ENCODE measurements at regions of chr2 and their contacts with region 1.

Region 1: DNA sequence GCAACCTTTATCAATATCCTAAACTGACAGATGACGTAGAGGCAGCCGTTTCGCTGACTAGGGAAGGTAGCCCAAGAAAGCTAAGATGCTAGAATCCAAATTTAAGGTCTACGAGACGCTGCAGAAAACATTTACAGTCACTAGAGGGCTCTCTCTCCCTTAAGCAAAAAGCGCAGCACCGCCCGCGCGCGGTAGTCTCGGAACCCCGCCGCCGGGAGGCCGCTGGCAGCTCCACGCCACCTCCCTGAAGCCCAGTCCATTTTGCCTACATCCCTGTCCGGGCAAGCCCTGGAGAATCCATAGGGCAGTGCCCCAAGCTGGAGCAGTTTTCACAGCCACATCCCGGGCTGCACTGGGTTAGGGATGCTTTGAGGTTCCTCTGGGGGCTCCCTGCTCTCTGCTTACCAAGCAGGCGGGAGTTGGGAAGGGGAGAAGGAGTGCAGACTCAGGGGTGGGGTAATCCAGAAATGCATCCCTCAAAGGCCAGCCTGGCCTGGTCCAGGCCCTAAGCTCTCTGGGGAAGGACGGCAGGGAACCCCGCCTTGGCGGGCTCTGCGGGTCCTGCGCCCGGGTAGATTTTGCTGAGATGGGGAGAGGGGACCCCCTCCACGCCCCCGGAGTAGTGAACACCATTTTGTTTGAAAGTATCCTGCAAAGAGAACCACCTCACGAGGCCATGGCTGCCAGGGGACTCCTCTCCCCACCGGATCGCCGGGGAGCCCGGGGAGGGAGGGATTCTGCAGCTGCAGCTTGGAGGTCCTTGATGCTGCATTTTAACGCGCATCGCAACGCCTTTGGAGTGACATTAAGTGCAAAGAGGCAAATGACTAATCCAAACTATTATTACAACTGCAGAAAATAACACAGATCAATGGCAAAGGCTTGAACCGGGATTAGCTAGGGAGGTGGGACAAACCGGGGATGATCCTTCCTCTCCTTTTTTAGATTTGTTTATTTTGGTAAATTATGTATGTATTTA is 1.3 kb upstream of the DPYSL5 start:
- DNase-seq: peak; percentile 82
- ATAC-seq: peak; percentile 86
- H3K4me3 ChIP-seq: no peak overlapping the region
- H3K27ac ChIP-seq: no peak overlapping the region
- H3K4me1 ChIP-seq: peaks cover 29% of the 10 kb centered on the region
- H3K27me3 ChIP-seq: peaks cover 81% of the 10 kb centered on the region
- CTCF ChIP-seq: peak; percentile 78

Region 2: GRCh38 chr2:26942543-26943295 is 96.1 kb after region 1 on chr2:
- intact Hi-C with region 1: loop called (anchors 5 kb)
- DNase-seq: peak; percentile 80
- ATAC-seq: peak; percentile 74
- H3K4me3 ChIP-seq: no peak overlapping the region
- H3K27ac ChIP-seq: no peak overlapping the region
- H3K4me1 ChIP-seq: no peaks in the 10 kb centered on the region
- H3K27me3 ChIP-seq: peaks cover 30% of the 10 kb centered on the region
- CTCF ChIP-seq: peak; percentile 85

Region 3: DNA sequence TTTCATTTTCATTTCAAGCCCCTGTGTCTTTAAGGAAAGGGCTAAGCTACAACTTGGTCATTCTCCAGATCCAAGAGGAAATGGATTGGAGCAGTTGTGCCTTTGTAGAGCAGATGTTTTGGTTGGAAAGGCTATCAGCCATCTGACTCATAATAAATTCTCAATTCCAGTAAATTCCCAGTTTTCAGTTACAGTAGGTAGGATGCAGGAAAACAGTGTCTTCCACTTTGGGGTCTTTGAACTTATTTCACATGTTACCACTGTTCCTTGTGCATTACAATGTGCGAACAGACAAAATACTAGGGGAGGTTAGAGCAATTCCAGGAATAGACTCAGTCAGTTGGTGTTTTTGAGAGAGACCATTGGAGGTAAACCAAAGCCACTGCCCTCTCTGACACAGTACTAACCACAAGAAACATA is 1255.8 kb after region 1 on chr2:
- intact Hi-C with region 1: no loop called
- DNase-seq: no peak
- ATAC-seq: no peak
- H3K4me3 ChIP-seq: no peak overlapping the region
- H3K27ac ChIP-seq: peak overlapping the region; percentile 18
- H3K4me1 ChIP-seq: no peaks in the 10 kb centered on the region
- H3K27me3 ChIP-seq: no peaks in the 10 kb centered on the region
- CTCF ChIP-seq: no peak

Measured in upper lobe of right lung (tissue), 1 donor.